ENCODE measurements at regions of chr14 and their contacts with region 1.

Region 1: GRCh38 chr14:88895116-88895515 is 70.7 kb downstream of the TTC8 start:
- DNase-seq: no peak

Region 2: GRCh38 chr14:88868558-88869159 is 26.5 kb before region 1 on chr14:
- intact Hi-C with region 1: no loop called
- DNase-seq: no peak

Region 3: GRCh38 chr14:89013084-89013504 is 118.0 kb after region 1 on chr14:
- intact Hi-C with region 1: no loop called
- DNase-seq: no peak

Region 4: GRCh38 chr14:89855961-89856656 is 961.0 kb after region 1 on chr14:
- intact Hi-C with region 1: loop called in 1 of 2 experiments (anchors 5 kb)
- DNase-seq: no peak